CD4-positive, alpha-beta memory T cell (primary cell): ENCODE measurements at regions of chr14 and their contacts with region 1.

Region 1: DNA sequence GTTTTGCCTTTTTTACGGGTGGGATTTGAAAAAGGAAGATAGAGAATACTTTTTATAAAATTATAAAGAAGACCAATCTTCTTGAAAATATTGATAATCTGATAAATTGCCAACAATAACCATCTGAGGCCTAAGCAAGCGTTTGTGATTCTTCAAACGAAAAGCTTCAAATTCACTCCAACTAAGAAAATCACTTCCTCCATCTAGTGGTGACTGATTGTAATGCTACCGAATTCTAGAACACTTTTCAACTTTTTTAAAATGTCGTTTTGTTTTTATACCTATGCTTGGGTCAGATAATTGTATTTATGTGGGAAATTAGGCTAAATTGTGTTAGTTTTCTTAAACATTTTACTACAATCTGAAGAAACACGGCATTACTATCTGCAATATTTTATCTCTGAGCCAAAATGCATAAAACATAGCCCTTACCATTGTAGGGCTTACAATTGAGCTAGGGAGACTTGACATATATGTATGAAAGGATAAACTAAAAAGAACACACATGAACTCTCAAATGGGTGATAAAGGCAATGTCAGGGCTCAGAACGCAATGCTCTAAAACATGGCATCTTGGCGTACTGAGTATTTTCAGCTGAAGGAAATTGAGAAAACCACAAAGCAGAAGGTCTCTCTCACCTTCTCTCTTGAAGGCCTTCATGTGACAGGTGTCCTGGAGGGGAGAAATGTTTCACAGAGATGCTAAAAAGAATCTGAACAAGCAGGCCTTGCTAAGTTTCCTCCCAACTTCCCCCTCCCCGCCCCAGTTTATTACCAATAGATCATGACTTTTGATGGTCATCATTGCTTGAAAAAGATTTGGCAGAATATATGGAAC is 36.8 kb upstream of the G2E3 start:
- DNase-seq: peak in 4 of 5 donors; percentile 20 to 36 (median 32)
- H3K4me3 ChIP-seq: no peak overlapping the region
- H3K4me3 Mint-ChIP-seq: peak overlapping the region in 3 of 8 donors; percentile 0 to 73 (median 12)
- H3K27ac ChIP-seq: no peak overlapping the region
- H3K27ac Mint-ChIP-seq: peak overlapping the region in 3 of 7 donors; percentile 45 to 62 (median 58)
- H3K4me1 ChIP-seq: peaks cover 4% of the 10 kb centered on the region
- H3K4me1 Mint-ChIP-seq: peaks cover 7 to 12% (median 10%) of the 10 kb centered on the region in 4 donors
- H3K27me3 ChIP-seq: no peaks in the 10 kb centered on the region
- H3K27me3 Mint-ChIP-seq: no peaks in the 10 kb centered on the region

Region 2: DNA sequence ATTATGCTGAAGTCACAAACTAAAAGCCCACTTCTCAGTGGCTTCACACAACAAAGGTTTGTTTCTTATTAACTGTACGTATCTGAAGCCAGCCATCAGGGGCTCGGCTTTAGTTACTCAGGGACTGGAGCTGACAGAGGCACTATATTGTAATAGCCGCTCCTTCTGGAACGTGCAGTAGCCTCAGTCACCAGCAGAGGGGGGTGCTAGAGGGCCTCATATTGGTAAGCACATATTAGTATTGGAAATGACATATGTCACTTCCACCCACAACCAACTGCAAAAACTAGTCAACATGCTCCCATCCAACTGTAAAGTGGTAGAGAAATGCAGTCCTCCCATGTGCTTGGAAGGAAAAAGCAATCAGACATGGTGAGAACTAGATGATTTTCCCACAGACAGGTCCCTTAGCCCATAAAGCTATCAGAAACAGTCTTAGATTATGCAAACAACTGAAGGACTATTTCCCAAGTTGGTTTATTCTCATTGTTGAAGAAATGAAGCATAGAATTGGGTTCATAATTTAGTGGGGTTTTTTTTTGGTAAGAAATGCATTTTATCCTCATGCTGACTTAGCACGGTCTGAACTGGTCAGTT is 146.7 kb before region 1 on chr14:
- CTCF ChIA-PET with region 1: interaction called, 16 read pairs
- POLR2A ChIA-PET with region 1: no interaction called
- intact Hi-C with region 1: no loop called
- DNase-seq: peak; percentile 36 to 50 (median 40)
- H3K4me3 ChIP-seq: no peak overlapping the region
- H3K4me3 Mint-ChIP-seq: no peak overlapping the region
- H3K27ac ChIP-seq: no peak overlapping the region
- H3K27ac Mint-ChIP-seq: no peak overlapping the region
- H3K4me1 ChIP-seq: no peaks in the 10 kb centered on the region
- H3K4me1 Mint-ChIP-seq: no peaks in the 10 kb centered on the region
- H3K27me3 ChIP-seq: no peaks in the 10 kb centered on the region
- H3K27me3 Mint-ChIP-seq: peaks cover 4 to 11% of the 10 kb centered on the region in 2 donors

Region 3: DNA sequence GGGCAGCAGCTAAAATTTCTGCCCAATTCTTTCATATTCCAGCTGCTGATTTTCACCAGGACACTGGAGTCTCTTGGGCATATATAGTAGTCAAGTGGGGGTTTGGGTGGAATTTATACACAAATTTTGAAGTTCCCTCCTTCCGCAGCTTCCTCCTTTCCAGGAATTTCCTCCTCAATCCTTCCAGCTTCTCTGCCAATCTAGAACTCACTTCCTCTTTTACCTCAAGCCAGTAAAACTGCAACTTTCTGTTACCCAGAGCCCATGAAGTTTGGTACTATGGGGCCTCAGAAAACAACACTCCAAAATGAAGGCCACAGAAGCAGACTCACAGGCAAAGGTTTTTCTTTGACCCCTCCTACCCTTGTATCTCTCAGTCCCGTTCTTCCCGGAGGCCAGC is 14.9 kb before region 1 on chr14:
- CTCF ChIA-PET with region 1: interaction called, 14 read pairs
- POLR2A ChIA-PET with region 1: no interaction called
- intact Hi-C with region 1: no loop called
- DNase-seq: no peak
- H3K4me3 ChIP-seq: no peak overlapping the region
- H3K4me3 Mint-ChIP-seq: no peak overlapping the region
- H3K27ac ChIP-seq: no peak overlapping the region
- H3K27ac Mint-ChIP-seq: no peak overlapping the region
- H3K4me1 ChIP-seq: no peaks in the 10 kb centered on the region
- H3K4me1 Mint-ChIP-seq: no peaks in the 10 kb centered on the region
- H3K27me3 ChIP-seq: no peaks in the 10 kb centered on the region
- H3K27me3 Mint-ChIP-seq: peaks cover 12 to 17% of the 10 kb centered on the region in 2 donors